ENCODE measurements at regions of chr21 and their contacts with region 1.

Region 1: DNA sequence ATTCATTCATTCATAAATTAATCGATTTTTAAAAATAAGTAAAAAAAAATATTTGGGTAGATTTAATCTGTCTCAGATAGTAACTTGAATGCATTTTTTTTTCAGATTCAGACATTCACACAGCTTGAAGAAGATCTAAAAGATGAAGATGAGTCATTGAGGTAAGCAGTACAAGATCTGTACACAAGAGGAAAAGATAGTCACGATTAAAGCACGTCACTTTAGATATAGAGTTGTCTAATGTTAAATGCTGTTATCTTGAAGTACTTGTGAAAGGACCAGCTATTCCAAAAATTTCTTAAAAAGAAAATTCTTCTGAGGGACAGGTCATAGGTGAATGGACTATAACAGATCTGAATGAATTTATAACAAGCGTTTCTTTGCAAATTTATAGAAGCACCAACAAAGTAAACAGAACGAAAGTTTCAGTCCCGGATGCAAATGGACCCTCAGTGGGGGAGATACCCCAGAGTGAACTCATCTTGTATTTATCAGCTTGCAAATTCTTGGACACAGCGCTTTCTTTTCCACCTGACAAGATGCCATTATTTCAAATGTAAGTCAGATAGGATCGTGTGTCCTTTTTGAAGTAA is 31.2 kb upstream of the MORC3 start:
- DNase-seq: no peak
- ATAC-seq: peak; percentile 49
- H3K4me3 ChIP-seq: no peak overlapping the region
- H3K4me3 Mint-ChIP-seq: peak overlapping the region; percentile 76
- H3K27ac ChIP-seq: peak overlapping the region; percentile 43 to 75
- H3K27ac Mint-ChIP-seq: peak overlapping the region; percentile 92
- H3K4me1 ChIP-seq: peaks cover 6 to 15% of the 10 kb centered on the region in 2 donors
- H3K4me1 Mint-ChIP-seq: peaks cover 29% of the 10 kb centered on the region
- H3K27me3 ChIP-seq: no peaks in the 10 kb centered on the region
- H3K27me3 Mint-ChIP-seq: no peaks in the 10 kb centered on the region
- CTCF ChIP-seq: no peak

Region 2: DNA sequence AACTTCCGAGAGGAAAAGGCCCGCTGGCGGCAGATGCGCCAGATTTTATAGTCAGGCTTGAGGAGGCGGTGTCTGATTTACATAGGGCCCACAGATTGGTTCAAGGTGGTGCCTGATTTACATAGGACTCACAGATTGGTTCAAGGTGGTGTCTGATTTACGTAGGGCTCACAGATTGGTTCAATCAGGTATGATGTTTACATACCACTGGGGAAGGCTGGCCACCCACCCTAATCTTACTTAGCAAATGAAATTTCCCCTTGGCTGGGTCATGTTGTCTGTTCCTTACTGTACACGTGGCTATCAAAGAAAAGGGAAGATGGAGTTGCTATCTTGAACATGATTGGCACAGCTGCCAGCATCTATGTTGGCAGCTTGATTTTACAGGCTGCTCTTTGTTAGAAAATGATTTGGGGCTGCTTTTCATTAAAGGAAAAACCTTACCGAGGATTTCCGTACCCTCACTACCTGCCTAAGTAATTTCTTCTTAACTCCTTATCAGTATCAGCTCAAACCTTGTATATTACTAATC is 324.8 kb before region 1 on chr21:
- CTCF ChIA-PET with region 1: no interaction called
- POLR2A ChIA-PET with region 1: no interaction called
- intact Hi-C with region 1: no loop called
- DNase-seq: no peak
- ATAC-seq: no peak
- H3K4me3 ChIP-seq: no peak overlapping the region
- H3K4me3 Mint-ChIP-seq: no peak overlapping the region
- H3K27ac ChIP-seq: no peak overlapping the region
- H3K27ac Mint-ChIP-seq: no peak overlapping the region
- H3K4me1 ChIP-seq: no peaks in the 10 kb centered on the region
- H3K4me1 Mint-ChIP-seq: no peaks in the 10 kb centered on the region
- H3K27me3 ChIP-seq: peaks cover 0 to 8% (median 3%) of the 10 kb centered on the region in 4 experiments
- H3K27me3 Mint-ChIP-seq: peaks cover 28% of the 10 kb centered on the region
- CTCF ChIP-seq: no peak

Region 3: DNA sequence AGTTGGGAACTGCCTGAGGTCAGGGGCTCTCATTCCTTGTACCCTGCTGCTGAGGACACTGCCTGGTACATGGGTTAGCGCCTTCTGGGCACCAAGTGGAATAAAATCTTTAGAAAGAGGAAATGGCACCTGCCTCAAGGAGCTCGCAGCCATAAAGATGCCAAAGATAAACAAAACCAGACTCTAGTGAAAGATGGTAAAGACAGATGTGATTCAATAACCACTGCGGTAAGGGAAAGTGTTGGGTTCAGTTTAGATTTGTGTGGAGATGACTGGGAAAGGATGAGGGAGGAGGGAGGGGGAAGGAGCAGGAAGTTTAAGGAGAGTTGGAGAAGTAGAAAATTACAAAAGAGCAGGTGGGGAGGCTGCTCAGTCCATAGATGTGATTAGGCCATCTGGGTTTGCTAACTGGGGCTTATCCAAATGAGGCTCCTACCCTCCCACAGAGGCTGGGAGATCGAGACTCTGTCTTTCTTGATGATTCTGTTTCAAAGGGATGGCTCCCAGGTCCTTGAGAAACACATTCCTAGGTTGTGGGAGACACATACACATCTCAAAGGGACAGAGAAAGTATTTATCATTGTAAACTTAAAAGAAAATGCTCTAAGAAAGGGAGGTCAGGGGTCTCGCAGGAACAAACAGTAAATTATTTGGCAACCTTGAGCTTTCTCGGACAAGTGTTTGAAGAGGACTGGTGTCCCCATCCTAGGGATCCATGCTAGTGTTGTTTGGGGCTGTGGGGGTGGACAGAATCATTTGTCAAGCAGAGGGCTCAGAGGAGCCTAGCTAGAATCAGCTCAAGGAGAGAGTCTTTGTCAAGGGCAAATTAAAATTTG is 34.4 kb before region 1 on chr21:
- CTCF ChIA-PET with region 1: interaction called, 7 read pairs
- POLR2A ChIA-PET with region 1: interaction called, 16 read pairs
- intact Hi-C with region 1: no loop called
- DNase-seq: peak; percentile 43
- ATAC-seq: peak; percentile 32
- H3K4me3 ChIP-seq: peak overlapping the region in 4 of 5 experiments; percentile 23 to 58 (median 36)
- H3K4me3 Mint-ChIP-seq: peak overlapping the region; percentile 75
- H3K27ac ChIP-seq: peak overlapping the region; percentile 81 to 84
- H3K27ac Mint-ChIP-seq: peak overlapping the region; percentile 91
- H3K4me1 ChIP-seq: peaks cover 67 to 72% of the 10 kb centered on the region in 2 donors
- H3K4me1 Mint-ChIP-seq: peaks cover 58% of the 10 kb centered on the region
- H3K27me3 ChIP-seq: no peaks in the 10 kb centered on the region
- H3K27me3 Mint-ChIP-seq: no peaks in the 10 kb centered on the region
- CTCF ChIP-seq: no peak

Region 4: DNA sequence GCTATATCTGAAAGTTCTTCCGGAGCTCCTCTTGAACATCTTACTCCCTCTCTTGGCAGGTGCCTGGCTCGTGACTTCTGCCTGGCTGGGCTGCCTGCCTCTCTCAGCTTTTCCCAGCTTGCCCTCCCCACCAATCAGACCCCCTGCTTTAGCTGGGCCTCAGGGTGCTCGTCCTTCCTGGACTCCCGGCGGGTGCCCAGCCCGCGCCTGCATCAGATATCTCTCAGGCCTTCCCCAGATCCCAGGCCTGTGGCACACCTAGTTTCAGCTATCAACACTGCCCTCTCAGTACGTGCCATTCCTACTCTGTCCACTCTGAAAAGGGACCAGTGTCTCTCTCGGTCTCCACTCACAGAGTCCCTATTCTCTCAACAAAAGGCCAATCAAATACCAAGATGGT is 287.7 kb after region 1 on chr21:
- CTCF ChIA-PET with region 1: no interaction called
- POLR2A ChIA-PET with region 1: no interaction called
- intact Hi-C with region 1: no loop called
- DNase-seq: no peak
- ATAC-seq: no peak
- H3K4me3 ChIP-seq: no peak overlapping the region
- H3K4me3 Mint-ChIP-seq: no peak overlapping the region
- H3K27ac ChIP-seq: no peak overlapping the region
- H3K27ac Mint-ChIP-seq: no peak overlapping the region
- H3K4me1 ChIP-seq: no peaks in the 10 kb centered on the region
- H3K4me1 Mint-ChIP-seq: no peaks in the 10 kb centered on the region
- H3K27me3 ChIP-seq: no peaks in the 10 kb centered on the region
- H3K27me3 Mint-ChIP-seq: no peaks in the 10 kb centered on the region
- CTCF ChIP-seq: no peak